CD4-positive, alpha-beta memory T cell (primary cell): ENCODE measurements at regions of chr10 and their contacts with region 1.

Region 1: GRCh38 chr10:88962336-88962735 is 9.8 kb upstream of the ACTA2 start:
- DNase-seq: peak in 4 of 5 donors; percentile 42 to 54 (median 44)
- H3K4me3 ChIP-seq: no peak overlapping the region
- H3K4me3 Mint-ChIP-seq: peak overlapping the region in 6 of 8 donors; percentile 12 to 80 (median 60)
- H3K27ac ChIP-seq: no peak overlapping the region
- H3K27ac Mint-ChIP-seq: peak overlapping the region in 6 of 7 donors; percentile 3 to 74 (median 26)
- H3K4me1 ChIP-seq: peaks cover 25% of the 10 kb centered on the region
- H3K4me1 Mint-ChIP-seq: peaks cover 18 to 33% (median 27%) of the 10 kb centered on the region in 4 donors
- H3K27me3 ChIP-seq: no peaks in the 10 kb centered on the region
- H3K27me3 Mint-ChIP-seq: no peaks in the 10 kb centered on the region

Region 2: GRCh38 chr10:88996927-88997326 is 34.6 kb after region 1 on chr10:
- CTCF ChIA-PET with region 1: interaction called, 3 read pairs
- POLR2A ChIA-PET with region 1: interaction called, 31 read pairs
- intact Hi-C with region 1: loop called (anchors 2 kb)
- DNase-seq: peak in 1 of 5 donors; percentile 38
- H3K4me3 ChIP-seq: no peak overlapping the region
- H3K4me3 Mint-ChIP-seq: peak overlapping the region in 7 of 8 donors; percentile 4 to 72 (median 55)
- H3K27ac ChIP-seq: peak overlapping the region; percentile 68
- H3K27ac Mint-ChIP-seq: peak overlapping the region; percentile 25 to 82 (median 73)
- H3K4me1 ChIP-seq: peaks cover 89% of the 10 kb centered on the region
- H3K4me1 Mint-ChIP-seq: peaks cover 55 to 90% (median 74%) of the 10 kb centered on the region in 4 donors
- H3K27me3 ChIP-seq: no peaks in the 10 kb centered on the region
- H3K27me3 Mint-ChIP-seq: no peaks in the 10 kb centered on the region